CD8-positive, alpha-beta T cell (primary cell): ENCODE measurements at regions of chr16 and their contacts with region 1.

Region 1: GRCh38 chr16:22240023-22240710 is 34.1 kb downstream of the EEF2K start:
- DNase-seq: no peak
- ATAC-seq: no peak
- H3K4me3 ChIP-seq: no peak overlapping the region
- H3K4me3 Mint-ChIP-seq: no peak overlapping the region
- H3K27ac ChIP-seq: peak overlapping the region in 1 of 2 experiments; percentile 47
- H3K27ac Mint-ChIP-seq: peak overlapping the region; percentile 69
- H3K4me1 ChIP-seq: peaks cover 24% of the 10 kb centered on the region
- H3K4me1 Mint-ChIP-seq: peaks cover 27% of the 10 kb centered on the region
- H3K27me3 ChIP-seq: no peaks in the 10 kb centered on the region
- H3K27me3 Mint-ChIP-seq: no peaks in the 10 kb centered on the region
- CTCF ChIP-seq: no peak

Region 2: GRCh38 chr16:22206013-22206841 is 33.9 kb before region 1 on chr16 and contains the start of gene EEF2K:
- CTCF ChIA-PET with region 1: interaction called, 4 read pairs
- POLR2A ChIA-PET with region 1: no interaction called
- intact Hi-C with region 1: loop called in 1 of 2 experiments (anchors 5 kb)
- DNase-seq: peak; percentile 66 to 91 (median 79)
- ATAC-seq: peak; percentile 90
- H3K4me3 ChIP-seq: peak within 1 kb of the TSS; percentile 61 to 86
- H3K4me3 Mint-ChIP-seq: peak within 1 kb of the TSS; percentile 98
- H3K27ac ChIP-seq: peak within 1 kb of the TSS; percentile 51 to 59
- H3K27ac Mint-ChIP-seq: peak within 1 kb of the TSS; percentile 92
- H3K4me1 ChIP-seq: peaks cover 20% of the 10 kb centered on the region
- H3K4me1 Mint-ChIP-seq: peaks cover 40% of the 10 kb centered on the region
- H3K27me3 ChIP-seq: no peaks in the 10 kb centered on the region
- H3K27me3 Mint-ChIP-seq: no peaks in the 10 kb centered on the region
- CTCF ChIP-seq: peak; percentile 65
- total RNA-seq, gene EEF2K: 14.4 to 14.6 TPM